ENCODE measurements at regions of chr4 and their contacts with region 1.

Region 1: DNA sequence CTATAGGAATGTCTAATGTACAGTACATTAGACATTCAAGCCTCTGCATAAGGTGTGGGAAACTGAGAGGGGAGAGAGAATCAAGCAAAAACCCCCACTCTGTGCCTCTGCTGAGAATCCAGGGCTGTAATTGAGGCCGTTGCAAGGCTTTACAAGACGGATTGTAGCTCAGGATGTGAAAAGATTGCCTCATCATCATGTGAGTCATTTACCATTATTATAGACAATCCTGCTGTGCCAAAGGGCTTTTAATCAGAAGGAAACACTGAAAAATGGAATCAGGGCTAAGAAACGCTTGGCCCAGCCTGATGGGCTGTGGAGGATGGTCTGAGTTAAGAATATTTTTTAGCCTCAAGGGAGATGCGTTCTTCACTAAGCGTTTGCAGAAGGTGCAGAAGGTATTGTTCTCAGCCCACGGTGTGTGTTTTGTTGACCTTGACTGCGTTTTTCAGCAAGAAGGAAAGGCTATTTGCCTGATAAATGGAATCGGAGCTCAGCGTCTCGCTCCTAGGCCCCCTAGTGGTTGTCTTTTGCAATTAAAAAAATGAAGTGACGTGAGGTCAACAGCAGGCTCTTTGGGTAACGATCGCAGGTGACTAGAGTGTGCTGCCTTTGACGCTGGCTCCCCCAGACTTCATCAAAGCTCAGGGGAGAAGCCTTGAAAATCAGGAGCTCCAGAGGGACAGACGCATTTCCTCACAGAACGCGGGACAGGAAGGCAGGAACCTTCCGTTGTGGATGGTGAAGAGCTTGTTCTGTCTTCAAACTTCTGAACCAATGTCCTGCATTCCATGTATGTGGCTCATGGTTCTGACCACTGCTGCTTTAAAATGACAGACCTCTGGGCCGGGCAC is 18.1 kb upstream of the CHRNA9 start:
- DNase-seq: peak; percentile 73
- H3K4me3 Mint-ChIP-seq: peak overlapping the region; percentile 48
- H3K27ac Mint-ChIP-seq: peak overlapping the region; percentile 90
- H3K4me1 Mint-ChIP-seq: peaks cover 57% of the 10 kb centered on the region
- H3K27me3 Mint-ChIP-seq: no peaks in the 10 kb centered on the region

Region 2: DNA sequence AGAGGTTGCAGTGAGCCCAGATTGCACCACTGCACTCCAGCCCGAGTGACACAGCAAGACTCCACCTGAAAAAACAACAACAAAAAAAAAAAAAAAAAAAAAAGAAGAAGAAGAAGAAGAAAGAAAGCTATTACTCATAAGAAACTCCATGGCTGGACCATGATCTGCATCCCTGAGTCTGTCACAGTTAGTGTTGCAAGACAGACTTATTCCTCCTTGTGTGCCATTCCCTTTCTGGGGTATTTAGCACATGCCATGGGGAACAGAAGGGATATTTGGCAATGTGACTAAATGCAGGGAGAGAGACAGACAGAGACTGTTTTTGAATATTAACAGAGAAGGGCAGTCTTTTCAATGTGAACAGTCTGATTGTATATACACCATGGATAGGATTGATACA is 322.6 kb before region 1 on chr4:
- CTCF ChIA-PET with region 1: no interaction called
- POLR2A ChIA-PET with region 1: no interaction called
- DNase-seq: no peak
- H3K4me3 Mint-ChIP-seq: no peak overlapping the region
- H3K27ac Mint-ChIP-seq: no peak overlapping the region
- H3K4me1 Mint-ChIP-seq: no peaks in the 10 kb centered on the region
- H3K27me3 Mint-ChIP-seq: peaks cover 4% of the 10 kb centered on the region

Region 3: DNA sequence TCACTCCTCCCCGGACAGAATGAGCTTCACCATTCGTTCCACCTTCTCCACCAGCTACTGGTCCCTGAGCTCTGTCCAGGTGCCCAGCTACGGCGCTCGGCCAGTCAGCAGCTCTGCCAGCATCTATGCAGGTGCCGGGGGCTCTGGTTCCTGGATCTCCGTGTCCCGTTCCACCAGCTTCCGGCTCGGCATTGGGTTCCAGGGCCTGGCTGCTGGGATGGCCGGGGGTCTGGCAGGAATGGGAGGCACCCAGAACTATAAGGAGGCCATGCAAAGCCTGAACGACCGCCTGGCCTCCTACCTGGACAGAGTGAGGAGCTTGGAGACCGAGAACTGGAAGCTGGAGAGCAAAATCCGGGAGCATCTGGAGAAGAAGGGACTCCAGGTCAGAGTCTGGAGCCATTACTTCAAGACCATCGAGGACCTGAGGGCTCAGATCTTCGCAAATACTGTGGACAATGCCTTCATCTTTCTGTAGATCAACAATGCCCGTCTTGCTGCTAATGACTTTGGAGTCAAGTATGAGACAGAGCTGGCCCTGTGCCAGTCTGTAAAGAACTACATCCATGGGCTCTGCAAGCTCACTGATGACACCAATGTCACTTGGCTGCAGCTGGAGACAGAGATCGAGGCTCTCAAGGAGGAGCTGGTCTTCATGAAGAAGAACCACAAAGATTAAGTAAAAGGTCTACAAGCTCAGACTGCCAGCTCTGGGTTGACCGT is 296.6 kb before region 1 on chr4:
- CTCF ChIA-PET with region 1: no interaction called
- POLR2A ChIA-PET with region 1: no interaction called
- DNase-seq: no peak
- H3K4me3 Mint-ChIP-seq: no peak overlapping the region
- H3K27ac Mint-ChIP-seq: no peak overlapping the region
- H3K4me1 Mint-ChIP-seq: no peaks in the 10 kb centered on the region
- H3K27me3 Mint-ChIP-seq: no peaks in the 10 kb centered on the region

Region 4: DNA sequence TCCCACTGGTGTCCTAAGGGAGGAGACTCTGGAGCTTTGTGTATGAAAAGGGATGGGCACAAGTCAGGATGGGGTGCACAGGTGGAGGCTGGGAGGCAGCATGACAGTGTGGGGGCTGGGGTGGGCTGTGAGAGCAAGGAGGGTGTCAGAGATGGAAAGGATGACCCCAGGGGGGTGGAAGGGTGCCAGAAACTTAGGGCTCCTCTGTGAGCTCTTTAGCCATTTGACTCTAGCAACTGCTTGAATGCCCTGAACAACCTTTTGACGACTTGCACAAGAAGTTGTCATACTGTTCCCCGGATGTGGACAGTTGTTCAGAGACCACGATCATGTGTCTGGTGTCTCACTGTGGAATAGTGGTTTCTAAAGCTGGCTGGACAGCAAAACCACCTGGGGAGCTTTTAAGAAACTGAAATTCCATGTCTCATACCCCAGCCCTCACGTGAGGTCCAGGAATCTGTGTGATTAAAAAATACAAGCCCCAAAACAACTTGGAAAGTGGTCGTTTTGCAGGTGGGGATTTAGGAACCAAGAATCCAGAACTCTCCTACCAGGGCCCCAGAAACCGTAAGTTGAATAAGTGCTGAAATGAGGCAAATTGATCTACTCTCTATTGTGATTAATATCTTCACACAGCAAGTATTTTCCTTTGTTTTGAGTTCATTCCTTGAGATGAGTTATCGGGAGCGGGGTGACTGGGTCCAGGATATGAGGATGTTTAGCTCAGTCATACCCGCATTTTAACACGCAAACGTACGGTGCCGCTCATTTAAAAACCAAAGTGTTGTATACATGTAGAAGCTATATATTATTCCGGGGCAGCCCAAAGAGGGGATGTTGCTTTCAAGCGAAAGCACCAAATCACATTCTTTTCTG is 116.8 kb before region 1 on chr4:
- CTCF ChIA-PET with region 1: interaction called, 17 read pairs
- POLR2A ChIA-PET with region 1: interaction called, 12 read pairs
- DNase-seq: peak; percentile 85
- H3K4me3 Mint-ChIP-seq: peak overlapping the region; percentile 94
- H3K27ac Mint-ChIP-seq: peak overlapping the region; percentile 98
- H3K4me1 Mint-ChIP-seq: peaks cover 42% of the 10 kb centered on the region
- H3K27me3 Mint-ChIP-seq: no peaks in the 10 kb centered on the region

Region 5: GRCh38 chr4:40205259-40206198 is 111.5 kb before region 1 on chr4:
- CTCF ChIA-PET with region 1: interaction called, 17 read pairs
- POLR2A ChIA-PET with region 1: interaction called, 12 read pairs
- DNase-seq: peak; percentile 56
- H3K4me3 Mint-ChIP-seq: peak overlapping the region; percentile 94
- H3K27ac Mint-ChIP-seq: peak overlapping the region; percentile 98
- H3K4me1 Mint-ChIP-seq: peaks cover 72% of the 10 kb centered on the region
- H3K27me3 Mint-ChIP-seq: no peaks in the 10 kb centered on the region

Region 6: GRCh38 chr4:40228497-40229365 is 88.3 kb before region 1 on chr4:
- CTCF ChIA-PET with region 1: interaction called, 16 read pairs
- POLR2A ChIA-PET with region 1: no interaction called
- DNase-seq: no peak
- H3K4me3 Mint-ChIP-seq: peak overlapping the region; percentile 59
- H3K27ac Mint-ChIP-seq: peak overlapping the region; percentile 86
- H3K4me1 Mint-ChIP-seq: peaks cover 91% of the 10 kb centered on the region
- H3K27me3 Mint-ChIP-seq: no peaks in the 10 kb centered on the region

Region 7: GRCh38 chr4:40388239-40388985 is 71.4 kb after region 1 on chr4:
- CTCF ChIA-PET with region 1: no interaction called
- POLR2A ChIA-PET with region 1: no interaction called
- DNase-seq: no peak
- H3K4me3 Mint-ChIP-seq: no peak overlapping the region
- H3K27ac Mint-ChIP-seq: no peak overlapping the region
- H3K4me1 Mint-ChIP-seq: peaks cover 4% of the 10 kb centered on the region
- H3K27me3 Mint-ChIP-seq: peaks cover 3% of the 10 kb centered on the region

Measured in activated CD4-positive, alpha-beta T cell treated with anti-CD3 and anti-CD28 coated beads, Interleukin-2, amount 10 ng/mL, durations not matched to agents 7 days and 5 days (primary cell).